ENCODE measurements at regions of chr10 and their contacts with region 1.

Region 1: GRCh38 chr10:64896582-64896981 is 1375.4 kb downstream of the REEP3 start:
- DNase-seq: no peak
- H3K4me3 ChIP-seq: no peak overlapping the region
- H3K27ac ChIP-seq: no peak overlapping the region
- H3K4me1 ChIP-seq: no peaks in the 10 kb centered on the region
- H3K27me3 ChIP-seq: no peaks in the 10 kb centered on the region
- CTCF ChIP-seq: no peak
- EP300 ChIP-seq: no peak
- POLR2A ChIP-seq: no peak

Region 2: GRCh38 chr10:64528294-64529002 is 368.1 kb before region 1 on chr10:
- intact Hi-C with region 1: loop called in 1 of 4 experiments (anchors 5 kb)
- DNase-seq: no peak
- H3K4me3 ChIP-seq: no peak overlapping the region
- H3K27ac ChIP-seq: no peak overlapping the region
- H3K4me1 ChIP-seq: no peaks in the 10 kb centered on the region
- H3K27me3 ChIP-seq: no peaks in the 10 kb centered on the region
- CTCF ChIP-seq: no peak
- EP300 ChIP-seq: no peak
- POLR2A ChIP-seq: no peak

Measured in ovary (tissue), 10 donors.